Heart right ventricle (tissue), 16 donors: ENCODE measurements at regions of chr6 and their contacts with region 1.

Region 1: DNA sequence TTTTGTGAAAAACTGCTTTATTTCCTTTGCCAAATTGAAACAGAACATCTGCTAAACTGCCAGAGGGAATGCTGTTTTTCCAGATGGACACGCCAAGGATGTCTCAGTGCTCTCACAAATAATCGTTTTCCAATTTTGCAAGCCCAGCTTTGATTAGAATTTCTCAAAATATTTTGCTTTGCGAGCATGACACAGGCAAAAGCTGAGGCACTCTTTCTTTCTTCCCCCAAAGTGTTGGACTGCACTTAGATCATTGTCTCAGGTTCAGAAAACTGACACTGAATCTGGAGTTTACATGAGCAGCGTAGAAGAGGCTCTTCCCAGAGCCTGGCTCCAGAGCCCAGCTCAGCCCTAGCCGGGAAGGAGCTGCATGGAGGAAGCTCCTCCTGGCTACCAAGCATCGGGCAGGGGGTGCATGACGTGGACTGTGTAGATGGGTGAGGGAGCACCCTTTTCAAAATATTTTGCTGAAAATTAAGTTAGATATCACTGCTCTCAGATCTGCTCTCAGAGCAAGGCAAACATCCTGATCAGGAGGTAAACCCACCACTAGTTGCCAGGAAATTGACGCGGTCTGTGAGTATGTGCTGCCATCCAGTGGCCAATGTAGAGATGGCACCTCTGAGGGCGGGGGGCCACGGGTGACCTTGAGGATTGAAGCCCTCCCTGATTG is 107.5 kb downstream of the SLC22A3 start:
- DNase-seq: peak; percentile 51 to 58
- ATAC-seq: peak; percentile 72 to 89 (median 85)
- H3K4me3 ChIP-seq: peak overlapping the region in 6 of 10 donors; percentile 6 to 43 (median 25)
- H3K27ac ChIP-seq: peak overlapping the region in 5 of 10 donors; percentile 23 to 63 (median 39)
- H3K4me1 ChIP-seq: peaks cover 0 to 14% (median 5%) of the 10 kb centered on the region in 9 donors
- H3K27me3 ChIP-seq: no peaks in the 10 kb centered on the region
- CTCF ChIP-seq: peak; percentile 76 to 98 (median 95)

Region 2: GRCh38 chr6:160088069-160088783 is 367.5 kb before region 1 on chr6:
- intact Hi-C with region 1: loop called in 7 of 10 experiments (anchors 1 to 5 kb)
- DNase-seq: peak; percentile 40 to 44
- ATAC-seq: peak in 7 of 8 donors; percentile 51 to 78 (median 65)
- H3K4me3 ChIP-seq: no peak overlapping the region
- H3K27ac ChIP-seq: no peak overlapping the region
- H3K4me1 ChIP-seq: no peaks in the 10 kb centered on the region
- H3K27me3 ChIP-seq: no peaks in the 10 kb centered on the region
- CTCF ChIP-seq: peak; percentile 40 to 71 (median 63)

Region 3: DNA sequence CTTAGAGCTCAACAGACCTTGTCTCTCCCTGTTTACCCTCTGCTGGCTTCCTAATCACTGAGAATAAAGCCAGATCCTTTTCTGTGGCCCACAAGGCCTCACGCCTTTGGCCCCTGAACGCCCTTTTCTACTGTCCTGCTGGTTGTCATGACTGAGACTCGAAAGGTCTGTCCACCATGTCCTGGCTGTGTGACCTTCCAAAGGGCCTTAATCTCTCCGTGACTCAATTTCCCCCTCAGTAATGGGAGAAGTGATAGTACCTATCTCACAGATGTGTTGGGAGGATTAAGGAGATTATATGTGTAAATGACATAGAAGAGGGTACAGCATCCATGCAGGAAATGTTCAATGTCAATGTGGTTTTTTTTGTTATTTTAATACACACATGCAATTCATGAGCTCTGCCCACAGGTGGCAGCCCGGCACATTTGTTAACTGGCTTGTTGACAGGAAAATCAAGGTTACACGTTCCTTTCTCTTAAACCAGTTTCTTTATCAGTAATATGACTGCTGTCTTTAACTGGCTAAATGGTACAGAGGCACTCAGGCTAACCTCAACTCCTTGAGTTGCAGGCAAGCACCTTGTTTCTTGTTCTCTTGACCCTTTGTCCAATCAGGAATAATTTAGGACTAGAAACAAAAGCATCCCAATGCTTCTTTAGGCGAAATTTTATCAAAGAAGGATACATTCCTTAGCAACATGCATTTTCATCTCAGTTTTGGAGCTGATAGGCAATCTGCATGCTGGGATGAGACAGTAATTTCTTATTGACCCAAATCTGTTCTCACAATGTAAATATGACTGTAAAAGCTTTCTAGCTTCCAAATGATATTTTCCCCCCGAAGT is 317.5 kb before region 1 on chr6:
- intact Hi-C with region 1: loop called (anchors 1 to 10 kb)
- DNase-seq: peak; percentile 37 to 48
- ATAC-seq: peak in 3 of 8 donors; percentile 20 to 42 (median 39)
- H3K4me3 ChIP-seq: no peak overlapping the region
- H3K27ac ChIP-seq: no peak overlapping the region
- H3K4me1 ChIP-seq: peaks cover 0 to 8% (median 4%) of the 10 kb centered on the region in 9 donors
- H3K27me3 ChIP-seq: peaks cover 0 to 8% (median 0%) of the 10 kb centered on the region in 7 donors
- CTCF ChIP-seq: peak; percentile 48 to 80 (median 68)

Region 4: DNA sequence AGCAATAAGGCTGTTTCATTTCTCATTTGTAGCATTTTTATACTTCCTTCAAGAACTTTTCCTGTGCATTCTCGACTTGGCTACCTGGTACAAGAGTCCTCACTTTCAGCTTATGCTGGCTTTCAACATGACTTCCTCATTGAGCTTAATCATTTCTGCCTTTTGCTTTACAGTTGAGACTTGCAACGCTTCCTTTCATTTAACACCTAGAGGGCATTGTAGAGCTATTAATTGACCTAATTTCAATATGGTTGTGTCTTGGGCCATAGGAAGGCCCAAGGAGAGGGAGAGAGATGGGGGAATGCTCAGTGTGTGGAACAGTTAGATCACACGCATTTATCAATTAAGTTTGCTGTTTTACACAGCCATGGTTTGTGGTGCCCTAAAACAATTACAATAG is 234.3 kb before region 1 on chr6:
- intact Hi-C with region 1: loop called in 1 of 10 experiments (anchors 5 kb)
- DNase-seq: no peak
- ATAC-seq: no peak
- H3K4me3 ChIP-seq: no peak overlapping the region
- H3K27ac ChIP-seq: no peak overlapping the region
- H3K4me1 ChIP-seq: peaks cover 0 to 5% (median 0%) of the 10 kb centered on the region in 9 donors
- H3K27me3 ChIP-seq: peaks cover 0 to 23% (median 0%) of the 10 kb centered on the region in 7 donors
- CTCF ChIP-seq: peak in 1 of 9 donors; percentile 17

Region 5: GRCh38 chr6:160534050-160534696 is 78.5 kb after region 1 on chr6:
- intact Hi-C with region 1: loop called in 3 of 10 experiments (anchors 1 kb)
- DNase-seq: peak; percentile 31 to 45
- ATAC-seq: peak in 7 of 8 donors; percentile 42 to 81 (median 61)
- H3K4me3 ChIP-seq: peak overlapping the region in 5 of 10 donors; percentile 8 to 41 (median 23)
- H3K27ac ChIP-seq: no peak overlapping the region
- H3K4me1 ChIP-seq: peaks cover 0 to 7% (median 0%) of the 10 kb centered on the region in 9 donors
- H3K27me3 ChIP-seq: peaks cover 0 to 6% (median under 1%) of the 10 kb centered on the region in 7 donors
- CTCF ChIP-seq: peak; percentile 75 to 96 (median 93)